ENCODE measurements at regions of chr6 and their contacts with region 1.

Region 1: GRCh38 chr6:2344319-2344905 is 99.0 kb upstream of the GMDS start:
- DNase-seq: no peak
- ATAC-seq: no peak
- H3K4me3 ChIP-seq: no peak overlapping the region
- H3K27ac ChIP-seq: no peak overlapping the region
- H3K4me1 ChIP-seq: peaks cover 0 to 7% (median 0%) of the 10 kb centered on the region in 12 donors
- H3K27me3 ChIP-seq: no peaks in the 10 kb centered on the region
- CTCF ChIP-seq: no peak
- POLR2A ChIP-seq: no peak

Region 2: GRCh38 chr6:2111162-2111677 is 233.2 kb before region 1 on chr6:
- intact Hi-C with region 1: loop called in 1 of 10 experiments (anchors 10 kb)
- DNase-seq: no peak
- ATAC-seq: peak in 3 of 4 donors; percentile 56 to 82 (median 66)
- H3K4me3 ChIP-seq: peak overlapping the region in 4 of 12 donors; percentile 1 to 23 (median 19)
- H3K27ac ChIP-seq: peak overlapping the region in 5 of 12 donors; percentile 12 to 74 (median 18)
- H3K4me1 ChIP-seq: peaks cover 0 to 18% (median 5%) of the 10 kb centered on the region in 12 donors
- H3K27me3 ChIP-seq: no peaks in the 10 kb centered on the region
- CTCF ChIP-seq: no peak
- POLR2A ChIP-seq: no peak

Region 3: GRCh38 chr6:2285510-2285909 is 58.9 kb before region 1 on chr6:
- intact Hi-C with region 1: loop called in 1 of 10 experiments (anchors 10 kb)
- DNase-seq: no peak
- ATAC-seq: no peak
- H3K4me3 ChIP-seq: no peak overlapping the region
- H3K27ac ChIP-seq: no peak overlapping the region
- H3K4me1 ChIP-seq: no peaks in the 10 kb centered on the region
- H3K27me3 ChIP-seq: no peaks in the 10 kb centered on the region
- CTCF ChIP-seq: no peak
- POLR2A ChIP-seq: no peak